ENCODE measurements at regions of chr7 and their contacts with region 1.

Region 1: GRCh38 chr7:2299131-2299829 is 15.0 kb downstream of the SNX8 start:
- DNase-seq: no peak
- H3K4me3 ChIP-seq: no peak overlapping the region
- H3K27ac ChIP-seq: no peak overlapping the region
- H3K4me1 ChIP-seq: peaks cover 3 to 13% (median 7%) of the 10 kb centered on the region in 4 experiments; a peak in 6 of 7 replicates
- H3K27me3 ChIP-seq: no peaks in the 10 kb centered on the region
- CTCF ChIP-seq: no peak
- EP300 ChIP-seq: no peak
- POLR2A ChIP-seq: no peak
- RAD21 ChIP-seq: no peak

Region 2: GRCh38 chr7:2241580-2242540 is 57.4 kb before region 1 on chr7 and contains the starts of genes MRM2 and NUDT1:
- CTCF ChIA-PET with region 1: interaction called, 4 read pairs
- POLR2A ChIA-PET with region 1: interaction called, 12 read pairs
- DNase-seq: peak in 1 of 2 experiments; percentile 92
- H3K4me3 ChIP-seq: peak within 1 kb of the TSS; percentile 84 to 100 (median 87)
- H3K27ac ChIP-seq: peak within 1 kb of the TSS; percentile 76
- H3K4me1 ChIP-seq: peaks cover 0 to 11% (median 4%) of the 10 kb centered on the region in 4 experiments; a peak in 4 of 7 replicates
- H3K27me3 ChIP-seq: no peaks in the 10 kb centered on the region; a peak in 1 of 7 replicates
- CTCF ChIP-seq: no peak
- EP300 ChIP-seq: no peak
- POLR2A ChIP-seq: peak in 1 of 2 experiments; percentile 90; a peak in 2 of 3 replicates
- RAD21 ChIP-seq: no peak
- total RNA-seq, gene MRM2: 38.6 and 38.7 TPM in 2 replicates
- total RNA-seq, gene NUDT1: 76.1 and 85.2 TPM in 2 replicates

Region 3: DNA sequence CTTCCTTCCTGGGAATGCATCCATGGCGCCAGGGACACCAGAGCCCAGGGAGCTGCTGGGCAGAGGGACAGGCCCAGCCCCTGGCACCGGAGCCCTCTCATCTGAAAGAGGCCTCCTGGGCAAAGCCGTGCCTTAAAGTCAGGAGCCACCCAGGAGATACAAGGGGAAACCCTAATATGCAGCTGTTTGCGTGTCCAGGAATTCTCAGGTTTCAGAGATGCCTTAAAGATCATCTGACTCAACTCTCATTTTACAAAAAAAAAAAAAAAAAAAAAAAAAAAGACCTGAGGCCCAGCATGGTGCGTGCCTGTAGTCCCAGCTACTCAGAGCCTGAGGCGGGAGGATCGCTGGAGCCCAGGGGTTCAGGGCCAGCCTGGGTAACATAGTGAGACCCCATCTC is 29.2 kb before region 1 on chr7:
- CTCF ChIA-PET with region 1: no interaction called
- POLR2A ChIA-PET with region 1: no interaction called
- DNase-seq: no peak
- H3K4me3 ChIP-seq: no peak overlapping the region
- H3K27ac ChIP-seq: no peak overlapping the region
- H3K4me1 ChIP-seq: peaks cover 0 to 12% (median 6%) of the 10 kb centered on the region in 4 experiments; a peak in 6 of 7 replicates
- H3K27me3 ChIP-seq: no peaks in the 10 kb centered on the region
- CTCF ChIP-seq: no peak
- EP300 ChIP-seq: no peak
- POLR2A ChIP-seq: no peak
- RAD21 ChIP-seq: no peak

Region 4: DNA sequence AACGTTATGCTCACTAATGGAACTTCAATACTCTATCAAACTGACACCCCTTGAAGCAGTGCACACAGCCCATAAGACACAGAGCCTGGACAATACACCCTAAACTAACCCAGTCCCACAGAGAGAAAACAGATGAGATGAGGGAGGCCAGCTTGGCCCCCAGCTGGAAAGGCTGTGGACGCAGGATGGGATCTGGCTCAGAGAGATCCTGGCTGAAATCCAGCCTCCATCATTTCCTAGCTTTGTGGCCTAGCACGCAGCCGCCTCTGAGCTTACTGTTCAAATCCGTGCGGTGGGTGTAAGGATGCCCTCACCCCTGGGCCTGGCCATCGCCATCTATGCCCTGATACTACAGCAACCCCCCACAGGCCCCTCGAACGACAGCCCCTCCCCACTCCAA is 17.7 kb before region 1 on chr7:
- CTCF ChIA-PET with region 1: interaction called, 3 read pairs
- POLR2A ChIA-PET with region 1: interaction called, 11 read pairs
- DNase-seq: no peak
- H3K4me3 ChIP-seq: no peak overlapping the region
- H3K27ac ChIP-seq: no peak overlapping the region
- H3K4me1 ChIP-seq: peaks cover 0 to 10% (median 2%) of the 10 kb centered on the region in 4 experiments; a peak in 4 of 7 replicates
- H3K27me3 ChIP-seq: no peaks in the 10 kb centered on the region
- CTCF ChIP-seq: no peak
- EP300 ChIP-seq: no peak
- POLR2A ChIP-seq: no peak
- RAD21 ChIP-seq: no peak

Region 5: GRCh38 chr7:2314209-2314955 is 15.1 kb after region 1 on chr7 and contains the start of gene SNX8:
- CTCF ChIA-PET with region 1: no interaction called
- POLR2A ChIA-PET with region 1: interaction called, 29 read pairs
- DNase-seq: peak; percentile 76 to 100
- H3K4me3 ChIP-seq: peak within 1 kb of the TSS; percentile 66 to 77 (median 74)
- H3K27ac ChIP-seq: peak within 1 kb of the TSS; percentile 35; the same call in 1 of the 2 replicates
- H3K4me1 ChIP-seq: peaks cover 4 to 10% (median 5%) of the 10 kb centered on the region in 4 experiments; a peak in 6 of 7 replicates
- H3K27me3 ChIP-seq: no peaks in the 10 kb centered on the region
- CTCF ChIP-seq: peak in 1 of 3 experiments; percentile 24; a peak in 1 of 4 replicates
- EP300 ChIP-seq: no peak
- POLR2A ChIP-seq: peak; percentile 66 to 78
- RAD21 ChIP-seq: peak in 1 of 2 experiments; percentile 12; a peak in 1 of 4 replicates
- total RNA-seq, gene SNX8: 46.2 and 49.5 TPM in 2 replicates

Region 6: DNA sequence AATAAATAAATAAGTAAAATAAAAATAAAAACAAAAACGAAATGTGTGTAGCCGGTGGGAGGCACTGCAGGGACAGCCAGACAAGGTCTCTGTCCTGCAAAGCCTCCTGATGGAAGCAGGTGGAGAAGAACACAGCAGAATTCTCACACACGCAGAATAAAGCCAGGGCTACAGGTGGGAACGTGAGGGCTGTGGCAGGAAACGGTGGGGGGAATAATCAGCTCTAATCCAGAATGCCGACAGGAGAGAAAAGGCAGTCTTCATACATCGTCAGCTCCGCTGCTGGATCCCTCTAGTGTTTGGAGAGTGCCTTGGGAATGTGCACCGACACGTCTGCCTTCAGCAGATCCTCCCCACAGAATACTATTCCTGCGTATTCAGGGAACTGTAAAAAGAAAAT is 21.7 kb after region 1 on chr7:
- CTCF ChIA-PET with region 1: interaction called, 3 read pairs
- POLR2A ChIA-PET with region 1: interaction called, 12 read pairs
- DNase-seq: no peak
- H3K4me3 ChIP-seq: no peak overlapping the region
- H3K27ac ChIP-seq: no peak overlapping the region
- H3K4me1 ChIP-seq: no peaks in the 10 kb centered on the region
- H3K27me3 ChIP-seq: no peaks in the 10 kb centered on the region
- CTCF ChIP-seq: peak in 2 of 3 experiments; percentile 24 to 30; a peak in 2 of 4 replicates
- EP300 ChIP-seq: no peak
- POLR2A ChIP-seq: no peak
- RAD21 ChIP-seq: peak; percentile 19 to 43; a peak in 1 of 4 replicates